ENCODE measurements at regions of chr10 and their contacts with region 1.

Region 1: GRCh38 chr10:97463363-97464132 is 17.6 kb downstream of the ZDHHC16 start:
- DNase-seq: peak; percentile 74
- H3K4me3 Mint-ChIP-seq: no peak overlapping the region
- H3K27ac Mint-ChIP-seq: peak overlapping the region; percentile 46
- H3K4me1 Mint-ChIP-seq: peaks cover 16% of the 10 kb centered on the region
- H3K27me3 Mint-ChIP-seq: no peaks in the 10 kb centered on the region
- CTCF ChIP-seq: peak; percentile 79

Region 2: DNA sequence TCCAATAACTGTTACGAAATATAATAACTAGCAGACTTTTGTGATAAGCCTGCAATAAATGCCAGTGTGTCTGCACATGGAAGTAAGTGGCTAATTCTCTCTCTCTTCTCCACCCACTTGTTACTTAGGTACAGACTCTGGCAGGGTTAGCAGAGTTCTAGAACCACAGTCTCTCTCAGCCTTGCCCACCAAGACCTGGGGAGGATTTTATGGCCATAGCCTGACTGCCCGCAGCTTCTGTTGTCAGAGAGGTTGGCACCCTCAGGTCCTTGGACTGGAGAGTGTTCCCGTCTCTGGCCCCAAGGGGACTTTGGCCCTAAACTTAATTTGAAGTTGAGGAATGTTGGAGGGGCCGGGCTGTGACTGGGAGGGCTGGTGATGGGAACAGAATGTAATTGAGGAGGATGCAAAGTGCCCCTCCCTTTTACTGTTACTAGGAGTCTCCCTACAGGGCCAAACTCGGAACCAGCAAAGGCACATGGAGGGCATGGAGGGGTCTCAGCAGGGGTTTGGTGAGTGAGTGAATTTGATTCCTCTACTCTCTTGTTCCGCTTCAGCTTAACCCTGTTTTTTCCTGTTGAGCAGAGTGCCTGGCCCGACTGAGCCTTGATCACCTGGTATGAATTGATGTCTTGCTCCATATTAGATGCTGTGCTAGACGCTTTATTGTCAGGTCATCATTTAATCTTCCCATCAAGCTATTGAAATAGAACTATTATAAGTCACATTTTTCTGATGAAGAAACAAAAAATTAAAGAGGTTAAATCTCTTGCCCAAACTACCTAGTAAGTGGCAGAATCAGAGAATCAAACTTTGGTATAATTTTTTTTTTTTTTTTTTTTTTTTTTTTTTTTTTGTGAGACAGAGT is 668.4 kb before region 1 on chr10:
- CTCF ChIA-PET with region 1: no interaction called
- POLR2A ChIA-PET with region 1: no interaction called
- intact Hi-C with region 1: no loop called
- DNase-seq: no peak
- H3K4me3 Mint-ChIP-seq: no peak overlapping the region
- H3K27ac Mint-ChIP-seq: no peak overlapping the region
- H3K4me1 Mint-ChIP-seq: peaks cover 6% of the 10 kb centered on the region
- H3K27me3 Mint-ChIP-seq: peaks cover 23% of the 10 kb centered on the region
- CTCF ChIP-seq: no peak

Region 3: DNA sequence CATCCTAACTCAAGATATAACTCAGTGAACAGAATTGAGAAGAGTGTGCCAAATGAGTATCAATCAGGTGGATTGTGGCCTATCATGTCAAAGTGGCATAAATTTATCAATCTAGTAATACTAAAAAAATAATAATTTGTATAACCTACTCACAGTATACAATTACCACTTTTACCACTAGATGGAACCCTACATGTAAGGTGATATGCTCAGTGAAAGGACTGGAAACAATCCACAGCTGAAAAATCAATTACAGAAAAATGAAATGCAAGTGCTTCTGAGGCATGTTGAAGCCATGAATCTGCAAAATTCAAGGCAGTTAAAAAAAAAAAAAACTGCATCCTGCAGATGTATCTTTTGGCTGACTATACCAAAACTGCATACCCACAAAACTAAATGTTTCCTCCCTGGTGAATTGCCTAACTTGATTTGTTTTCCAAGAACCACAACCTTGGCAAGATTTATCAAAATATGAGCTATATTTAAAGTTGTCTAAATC is 185.0 kb before region 1 on chr10:
- CTCF ChIA-PET with region 1: no interaction called
- POLR2A ChIA-PET with region 1: no interaction called
- intact Hi-C with region 1: no loop called
- DNase-seq: peak; percentile 84
- H3K4me3 Mint-ChIP-seq: no peak overlapping the region
- H3K27ac Mint-ChIP-seq: peak overlapping the region; percentile 89
- H3K4me1 Mint-ChIP-seq: peaks cover 17% of the 10 kb centered on the region
- H3K27me3 Mint-ChIP-seq: no peaks in the 10 kb centered on the region
- CTCF ChIP-seq: peak; percentile 37

Region 4: GRCh38 chr10:97475936-97476594 is 12.5 kb after region 1 on chr10:
- CTCF ChIA-PET with region 1: interaction called, 43 read pairs
- POLR2A ChIA-PET with region 1: interaction called, 11 read pairs
- intact Hi-C with region 1: no loop called
- DNase-seq: peak; percentile 57
- H3K4me3 Mint-ChIP-seq: no peak overlapping the region
- H3K27ac Mint-ChIP-seq: peak overlapping the region; percentile 46
- H3K4me1 Mint-ChIP-seq: peaks cover 19% of the 10 kb centered on the region
- H3K27me3 Mint-ChIP-seq: no peaks in the 10 kb centered on the region
- CTCF ChIP-seq: no peak

Region 5: DNA sequence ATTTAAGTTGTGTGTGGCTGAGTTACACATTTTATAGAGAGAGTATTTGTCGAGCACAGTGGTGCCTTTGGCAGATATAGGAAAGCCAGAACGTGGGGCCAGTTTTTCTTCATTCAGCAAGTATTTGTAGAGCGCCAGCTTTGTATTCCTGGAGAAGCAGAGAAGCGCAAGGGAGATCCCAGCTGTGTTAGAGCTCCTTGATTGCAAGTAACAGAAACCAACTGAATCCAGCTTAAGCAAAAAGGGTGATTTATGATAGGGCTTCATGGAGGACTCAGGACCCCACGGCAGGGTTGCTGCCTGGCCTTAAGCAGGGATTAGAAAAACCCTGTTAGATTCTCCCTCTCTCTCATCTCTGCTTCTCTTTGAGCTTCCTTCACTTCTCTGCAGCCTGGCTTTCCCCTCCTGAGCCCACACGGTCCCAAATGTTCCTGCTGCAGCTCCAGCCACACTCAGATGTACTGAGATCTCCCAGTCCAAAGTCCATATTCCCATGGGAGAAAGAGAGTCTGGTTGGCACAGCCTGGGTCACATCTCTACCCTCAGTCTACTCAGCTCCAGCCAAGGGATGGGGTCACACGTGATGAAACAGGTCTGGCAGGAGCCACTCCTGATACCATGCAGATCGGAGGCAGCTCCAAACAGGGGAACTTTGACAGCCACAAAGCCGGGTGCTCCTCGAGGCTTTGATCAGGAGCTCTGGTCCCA is 51.9 kb after region 1 on chr10:
- CTCF ChIA-PET with region 1: no interaction called
- POLR2A ChIA-PET with region 1: no interaction called
- intact Hi-C with region 1: no loop called
- DNase-seq: no peak
- H3K4me3 Mint-ChIP-seq: no peak overlapping the region
- H3K27ac Mint-ChIP-seq: no peak overlapping the region
- H3K4me1 Mint-ChIP-seq: peaks cover 13% of the 10 kb centered on the region
- H3K27me3 Mint-ChIP-seq: no peaks in the 10 kb centered on the region
- CTCF ChIP-seq: no peak

Region 6: GRCh38 chr10:97640174-97640867 is 176.8 kb after region 1 on chr10 and contains the start of gene PI4K2A:
- CTCF ChIA-PET with region 1: interaction called, 5 read pairs
- POLR2A ChIA-PET with region 1: interaction called, 11 read pairs
- intact Hi-C with region 1: no loop called
- DNase-seq: peak; percentile 99
- H3K4me3 Mint-ChIP-seq: peak within 1 kb of the TSS; percentile 87
- H3K27ac Mint-ChIP-seq: peak within 1 kb of the TSS; percentile 10
- H3K4me1 Mint-ChIP-seq: peaks cover 15% of the 10 kb centered on the region
- H3K27me3 Mint-ChIP-seq: no peaks in the 10 kb centered on the region
- CTCF ChIP-seq: no peak
- total RNA-seq, gene PI4K2A: 23.5 and 26.6 TPM in 2 replicates